GM12878 (cell line): ENCODE measurements at regions of chr12 and their contacts with region 1.

Region 1: DNA sequence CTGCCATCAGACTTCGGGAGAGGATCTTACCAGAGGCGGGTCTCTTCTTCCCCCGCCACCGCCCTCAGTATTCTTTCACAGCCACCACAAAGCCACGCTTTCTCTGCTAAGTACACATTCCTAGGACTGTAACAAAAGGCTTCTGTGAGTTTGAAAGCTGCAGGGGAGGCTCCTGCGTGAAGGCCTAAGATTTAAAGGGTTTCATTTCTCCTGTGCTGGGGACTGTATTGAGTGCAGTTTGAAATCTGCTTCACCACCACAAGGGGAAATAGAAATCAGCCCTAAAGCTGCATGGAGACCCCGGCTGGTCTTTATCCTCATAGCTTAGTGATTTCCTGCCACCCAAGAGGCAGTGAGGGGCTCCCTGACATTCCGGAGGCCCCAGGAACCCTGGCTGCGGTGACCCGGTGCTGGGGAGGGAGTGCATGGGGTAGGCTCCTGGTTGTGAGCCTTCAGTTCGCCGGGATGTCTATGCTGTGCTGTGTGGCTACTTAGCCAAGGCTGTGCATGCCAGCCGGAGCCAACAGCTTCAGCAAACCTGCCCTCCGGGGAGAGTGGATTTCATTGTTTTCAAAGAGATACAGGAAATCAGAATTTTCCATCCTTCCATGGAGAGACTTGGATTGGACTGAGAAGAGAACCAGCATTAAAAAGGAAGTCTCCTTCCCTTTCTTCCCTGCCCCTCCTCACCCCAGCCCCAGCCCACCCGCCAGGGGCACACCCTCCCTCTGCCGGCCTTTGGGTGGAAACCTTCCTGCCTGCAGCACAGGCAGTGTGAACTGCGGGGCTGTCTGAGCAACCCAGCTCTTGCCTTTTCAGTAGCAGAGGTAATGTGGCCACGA is 163.3 kb downstream of the ETV6 start:
- DNase-seq: no peak
- ATAC-seq: peak; percentile 89
- H3K4me3 ChIP-seq: peak overlapping the region; percentile 61
- H3K27ac ChIP-seq: peak overlapping the region; percentile 93
- H3K4me1 ChIP-seq: peaks cover 41% of the 10 kb centered on the region
- H3K27me3 ChIP-seq: no peaks in the 10 kb centered on the region
- CTCF ChIP-seq: peak; percentile 19 to 38 (median 20); a peak in 4 of 6 replicates
- EP300 ChIP-seq: no peak
- POLR2A ChIP-seq: peak; percentile 40; the same call in 1 of the 2 replicates
- RAD21 ChIP-seq: peak; percentile 34; the same call in 1 of the 2 replicates

Region 2: GRCh38 chr12:11765817-11766794 is 46.7 kb before region 1 on chr12:
- CTCF ChIA-PET with region 1: interaction called, 4 read pairs
- POLR2A ChIA-PET with region 1: interaction called, 4 read pairs
- RAD21 ChIA-PET with region 1: interaction called, 71 read pairs
- SMC1A ChIA-PET with region 1: interaction called, 148 read pairs
- in situ Hi-C with region 1: no loop called
- intact Hi-C with region 1: loop called (anchors 2 kb)
- DNase-seq: peak; percentile 92
- ATAC-seq: peak; percentile 75
- H3K4me3 ChIP-seq: peak overlapping the region; percentile 11; the same call in 1 of the 2 replicates
- H3K27ac ChIP-seq: peak overlapping the region; percentile 100
- H3K4me1 ChIP-seq: peaks cover 92% of the 10 kb centered on the region
- H3K27me3 ChIP-seq: no peaks in the 10 kb centered on the region
- CTCF ChIP-seq: no peak
- EP300 ChIP-seq: peak; percentile 81 to 89
- POLR2A ChIP-seq: 0 out of 2 replicates have a peak, but pooled peaks have one; percentile 32
- RAD21 ChIP-seq: peak; percentile 19; the same call in 1 of the 2 replicates

Region 3: GRCh38 chr12:11785712-11786111 is 27.1 kb before region 1 on chr12:
- CTCF ChIA-PET with region 1: interaction called, 8 read pairs
- POLR2A ChIA-PET with region 1: interaction called, 7 read pairs
- RAD21 ChIA-PET with region 1: interaction called, 37 read pairs
- SMC1A ChIA-PET with region 1: interaction called, 117 read pairs
- in situ Hi-C with region 1: no loop called
- intact Hi-C with region 1: loop called (anchors 1 kb)
- DNase-seq: no peak
- ATAC-seq: no peak
- H3K4me3 ChIP-seq: no peak overlapping the region
- H3K27ac ChIP-seq: no peak overlapping the region
- H3K4me1 ChIP-seq: peaks cover 36% of the 10 kb centered on the region
- H3K27me3 ChIP-seq: no peaks in the 10 kb centered on the region
- CTCF ChIP-seq: no peak
- EP300 ChIP-seq: no peak
- POLR2A ChIP-seq: no peak
- RAD21 ChIP-seq: no peak

Region 4: DNA sequence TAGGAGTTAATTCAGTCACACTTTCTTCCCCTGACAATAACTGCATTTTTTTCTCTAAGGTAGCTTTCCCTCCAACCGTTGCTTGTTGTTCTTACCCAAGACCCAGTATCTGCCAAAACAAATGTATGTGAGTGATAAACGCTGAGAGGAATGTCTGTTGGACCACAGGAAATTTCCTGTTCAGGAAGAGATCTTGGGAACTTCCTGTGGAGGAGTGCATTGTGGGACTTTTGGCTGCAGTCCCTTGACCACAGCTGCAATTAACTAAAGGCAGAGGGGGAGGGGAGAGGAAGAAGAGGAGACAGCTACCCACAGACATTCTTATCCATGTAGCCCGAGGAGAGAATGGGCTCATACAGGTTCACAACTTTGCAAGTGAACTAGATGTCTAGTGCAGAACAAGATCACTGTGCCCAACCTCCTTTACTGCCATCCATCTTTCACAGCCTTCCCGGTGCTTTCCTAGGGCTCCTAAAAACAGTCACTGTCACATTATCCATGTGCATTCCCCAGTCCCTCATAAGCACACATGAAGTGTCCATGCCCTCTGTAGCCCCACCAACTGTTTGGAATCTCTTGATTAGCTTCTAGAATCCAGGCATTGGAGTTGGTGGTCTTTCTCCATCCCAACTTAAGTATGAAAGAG is 13.8 kb before region 1 on chr12:
- CTCF ChIA-PET with region 1: interaction called, 16 read pairs
- POLR2A ChIA-PET with region 1: interaction called, 8 read pairs
- RAD21 ChIA-PET with region 1: interaction called, 8 read pairs
- SMC1A ChIA-PET with region 1: interaction called, 117 read pairs
- in situ Hi-C with region 1: no loop called
- intact Hi-C with region 1: no loop called
- DNase-seq: no peak
- ATAC-seq: no peak; the same call in 2 of the 3 replicates
- H3K4me3 ChIP-seq: no peak overlapping the region
- H3K27ac ChIP-seq: peak overlapping the region; percentile 1; the same call in 1 of the 2 replicates
- H3K4me1 ChIP-seq: peaks cover 10% of the 10 kb centered on the region; the same call in 1 of the 2 replicates
- H3K27me3 ChIP-seq: no peaks in the 10 kb centered on the region
- CTCF ChIP-seq: no peak
- EP300 ChIP-seq: no peak
- POLR2A ChIP-seq: peak; percentile 12; the same call in 1 of the 2 replicates
- RAD21 ChIP-seq: no peak

Region 5: GRCh38 chr12:11827091-11828061 is 14.6 kb after region 1 on chr12:
- CTCF ChIA-PET with region 1: interaction called, 8 read pairs
- POLR2A ChIA-PET with region 1: interaction called, 24 read pairs
- RAD21 ChIA-PET with region 1: interaction called, 17 read pairs
- SMC1A ChIA-PET with region 1: interaction called, 75 read pairs
- in situ Hi-C with region 1: no loop called
- intact Hi-C with region 1: no loop called
- DNase-seq: no peak
- ATAC-seq: no peak
- H3K4me3 ChIP-seq: no peak overlapping the region
- H3K27ac ChIP-seq: 0 out of 2 replicates have a peak overlapping the region, but pooled peaks have one; percentile 6
- H3K4me1 ChIP-seq: peaks cover 64% of the 10 kb centered on the region
- H3K27me3 ChIP-seq: no peaks in the 10 kb centered on the region
- CTCF ChIP-seq: no peak
- EP300 ChIP-seq: no peak
- POLR2A ChIP-seq: no peak
- RAD21 ChIP-seq: no peak

Region 6: GRCh38 chr12:12527820-12528296 is 715.1 kb after region 1 on chr12:
- CTCF ChIA-PET with region 1: no interaction called
- POLR2A ChIA-PET with region 1: no interaction called
- RAD21 ChIA-PET with region 1: no interaction called
- SMC1A ChIA-PET with region 1: no interaction called
- in situ Hi-C with region 1: no loop called
- intact Hi-C with region 1: no loop called
- DNase-seq: no peak
- ATAC-seq: peak; percentile 63
- H3K4me3 ChIP-seq: no peak overlapping the region
- H3K27ac ChIP-seq: no peak overlapping the region
- H3K4me1 ChIP-seq: peaks cover 6% of the 10 kb centered on the region
- H3K27me3 ChIP-seq: no peaks in the 10 kb centered on the region
- CTCF ChIP-seq: no peak
- EP300 ChIP-seq: no peak
- POLR2A ChIP-seq: no peak
- RAD21 ChIP-seq: no peak